Esophagus muscularis mucosa (tissue), 4 donors: ENCODE measurements at regions of chr3 and their contacts with region 1.

Region 1: DNA sequence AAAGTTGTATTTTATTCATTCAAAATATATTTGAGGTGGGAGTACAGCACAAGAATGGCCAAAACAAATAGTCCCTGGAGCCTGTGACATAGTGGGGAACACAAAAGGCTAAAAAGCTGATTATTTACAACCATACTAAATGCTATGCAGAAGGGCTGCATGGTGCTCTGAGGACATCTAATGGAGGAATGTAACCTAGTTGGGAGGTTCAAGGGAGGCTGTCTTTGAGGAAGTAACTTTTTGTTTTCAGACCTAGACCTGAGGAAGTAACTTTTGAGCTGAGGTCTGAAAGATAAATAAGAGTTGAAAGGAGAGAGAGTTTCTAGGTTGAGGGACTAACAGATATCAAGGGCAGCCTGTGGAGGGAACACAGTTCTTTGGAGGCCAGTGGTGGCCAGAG is 34.8 kb upstream of the RASA2 start:
- DNase-seq: no peak
- H3K4me3 ChIP-seq: no peak overlapping the region
- H3K27ac ChIP-seq: peak overlapping the region; percentile 2 to 51 (median 26)
- H3K4me1 ChIP-seq: peaks cover 14 to 65% (median 55%) of the 10 kb centered on the region in 4 donors
- H3K27me3 ChIP-seq: no peaks in the 10 kb centered on the region
- CTCF ChIP-seq: peak; percentile 73 to 74 (median 73)
- EP300 ChIP-seq: no peak
- POLR2A ChIP-seq: no peak

Region 2: GRCh38 chr3:141105828-141106628 is 346.0 kb before region 1 on chr3:
- intact Hi-C with region 1: loop called (anchors 5 kb)
- DNase-seq: peak; percentile 96
- H3K4me3 ChIP-seq: no peak overlapping the region
- H3K27ac ChIP-seq: no peak overlapping the region
- H3K4me1 ChIP-seq: peaks cover 0 to 14% (median 7%) of the 10 kb centered on the region in 4 donors
- H3K27me3 ChIP-seq: no peaks in the 10 kb centered on the region
- CTCF ChIP-seq: peak; percentile 77 to 80 (median 78)
- EP300 ChIP-seq: no peak
- POLR2A ChIP-seq: no peak

Region 3: GRCh38 chr3:141231101-141231935 is 220.7 kb before region 1 on chr3 and contains the start of gene PXYLP1:
- intact Hi-C with region 1: loop called (anchors 10 kb)
- DNase-seq: peak; percentile 96
- H3K4me3 ChIP-seq: peak within 1 kb of the TSS; percentile 86 to 96 (median 91)
- H3K27ac ChIP-seq: peak within 1 kb of the TSS; percentile 76 to 87 (median 84)
- H3K4me1 ChIP-seq: peaks cover 16 to 27% (median 18%) of the 10 kb centered on the region in 4 donors
- H3K27me3 ChIP-seq: no peaks in the 10 kb centered on the region
- CTCF ChIP-seq: peak; percentile 66 to 85 (median 78)
- EP300 ChIP-seq: no peak
- POLR2A ChIP-seq: peak; percentile 8
- total RNA-seq, gene PXYLP1: 4.5 to 12.5 (median 9.4) TPM

Region 4: GRCh38 chr3:141303481-141304223 is 148.4 kb before region 1 on chr3:
- intact Hi-C with region 1: loop called (anchors 2 kb)
- DNase-seq: no peak
- H3K4me3 ChIP-seq: no peak overlapping the region
- H3K27ac ChIP-seq: no peak overlapping the region
- H3K4me1 ChIP-seq: peaks cover 0 to 4% (median 0%) of the 10 kb centered on the region in 4 donors
- H3K27me3 ChIP-seq: no peaks in the 10 kb centered on the region
- CTCF ChIP-seq: peak; percentile 70 to 81 (median 79)
- EP300 ChIP-seq: no peak
- POLR2A ChIP-seq: no peak

Region 5: GRCh38 chr3:141360888-141361598 is 91.0 kb before region 1 on chr3:
- intact Hi-C with region 1: loop called (anchors 2 kb)
- DNase-seq: no peak
- H3K4me3 ChIP-seq: peak overlapping the region; percentile 30 to 50 (median 38)
- H3K27ac ChIP-seq: peak overlapping the region; percentile 42 to 71 (median 56)
- H3K4me1 ChIP-seq: peaks cover 9 to 18% (median 16%) of the 10 kb centered on the region in 4 donors
- H3K27me3 ChIP-seq: no peaks in the 10 kb centered on the region
- CTCF ChIP-seq: peak; percentile 73 to 87 (median 85)
- EP300 ChIP-seq: no peak
- POLR2A ChIP-seq: no peak

Region 6: DNA sequence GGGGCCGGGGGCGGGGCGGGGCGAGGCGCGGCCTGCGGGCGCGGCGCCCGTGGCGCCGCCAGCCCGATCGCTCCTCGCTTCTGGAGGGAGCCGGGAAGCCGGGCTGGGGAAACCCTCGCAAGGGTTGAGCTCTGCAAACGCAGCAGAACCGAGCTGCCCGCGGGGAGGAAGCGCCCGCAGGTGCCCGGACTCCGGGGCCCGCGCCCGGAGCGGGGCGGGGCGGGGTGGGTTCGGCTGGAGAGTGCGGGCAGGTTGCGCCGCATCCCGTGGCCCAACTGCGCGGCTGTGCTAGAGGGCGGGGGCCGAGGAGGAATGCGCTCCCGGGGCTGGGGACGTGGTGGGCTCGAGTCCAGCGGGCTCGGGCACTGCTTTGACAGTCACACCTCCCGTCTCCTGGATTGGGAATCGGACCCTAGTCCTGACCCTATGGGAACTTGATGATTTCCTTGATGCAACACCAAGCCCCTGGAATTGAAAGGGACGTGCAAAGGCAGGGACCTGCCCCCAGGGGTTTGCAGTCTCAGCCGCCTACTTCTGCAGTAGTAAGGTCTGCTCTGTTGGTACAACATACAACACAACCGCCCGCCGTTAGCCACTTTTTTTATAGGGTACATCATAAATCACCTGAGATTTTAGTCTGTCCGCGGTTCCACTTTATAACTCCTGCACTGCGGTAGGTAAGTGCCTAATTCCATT is 49.4 kb before region 1 on chr3:
- intact Hi-C with region 1: loop called (anchors 5 kb)
- DNase-seq: no peak
- H3K4me3 ChIP-seq: peak overlapping the region; percentile 81 to 91 (median 85)
- H3K27ac ChIP-seq: peak overlapping the region; percentile 98 to 100 (median 99)
- H3K4me1 ChIP-seq: peaks cover 59 to 79% (median 76%) of the 10 kb centered on the region in 4 donors
- H3K27me3 ChIP-seq: no peaks in the 10 kb centered on the region
- CTCF ChIP-seq: peak in 2 of 3 experiments; percentile 11 to 16
- EP300 ChIP-seq: no peak
- POLR2A ChIP-seq: no peak

Region 7: GRCh38 chr3:141875374-141875892 is 423.4 kb after region 1 on chr3:
- intact Hi-C with region 1: loop called (anchors 10 kb)
- DNase-seq: peak; percentile 97
- H3K4me3 ChIP-seq: peak overlapping the region; percentile 83 to 95 (median 93)
- H3K27ac ChIP-seq: peak overlapping the region; percentile 99 to 100 (median 100)
- H3K4me1 ChIP-seq: peaks cover 26 to 28% (median 27%) of the 10 kb centered on the region in 4 donors
- H3K27me3 ChIP-seq: no peaks in the 10 kb centered on the region
- CTCF ChIP-seq: peak; percentile 83 to 92 (median 89)
- EP300 ChIP-seq: no peak
- POLR2A ChIP-seq: no peak

Region 8: DNA sequence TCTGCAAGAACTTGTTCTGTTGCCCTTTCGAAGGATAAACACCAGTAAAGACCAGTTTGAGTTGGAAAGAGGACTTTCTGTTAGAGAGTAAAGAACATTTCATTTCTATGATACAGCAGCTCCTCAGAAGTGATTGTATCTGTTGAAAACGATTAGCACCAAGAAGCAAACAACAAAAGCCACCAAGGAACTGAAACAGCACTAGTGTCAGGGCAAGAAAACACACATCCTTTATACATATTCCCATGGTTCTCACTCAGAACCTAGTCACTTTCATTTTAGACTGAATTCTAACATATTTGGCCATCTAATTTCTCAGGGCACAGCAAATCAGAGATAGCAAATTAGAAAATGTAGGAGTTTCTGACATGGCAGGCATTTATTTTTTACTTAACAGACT is 540.5 kb after region 1 on chr3:
- intact Hi-C with region 1: no loop called
- DNase-seq: no peak
- H3K4me3 ChIP-seq: no peak overlapping the region
- H3K27ac ChIP-seq: no peak overlapping the region
- H3K4me1 ChIP-seq: peaks cover 3 to 46% (median 15%) of the 10 kb centered on the region in 4 donors
- H3K27me3 ChIP-seq: no peaks in the 10 kb centered on the region
- CTCF ChIP-seq: no peak
- EP300 ChIP-seq: no peak
- POLR2A ChIP-seq: no peak